ENCODE measurements at regions of chrX and their contacts with region 1.

Region 1: GRCh38 chrX:148051973-148052372 is 70.8 kb downstream of the FMR1NB start:
- DNase-seq: no peak
- ATAC-seq: no peak
- H3K4me3 ChIP-seq: no peak overlapping the region
- H3K27ac ChIP-seq: no peak overlapping the region
- H3K4me1 ChIP-seq: no peaks in the 10 kb centered on the region
- H3K27me3 ChIP-seq: no peaks in the 10 kb centered on the region
- CTCF ChIP-seq: no peak
- POLR2A ChIP-seq: no peak

Region 2: GRCh38 chrX:148080593-148080992 is 28.6 kb after region 1 on chrX:
- in situ Hi-C with region 1: no loop called
- intact Hi-C with region 1: no loop called
- DNase-seq: no peak
- ATAC-seq: no peak
- H3K4me3 ChIP-seq: no peak overlapping the region
- H3K27ac ChIP-seq: no peak overlapping the region
- H3K4me1 ChIP-seq: no peaks in the 10 kb centered on the region
- H3K27me3 ChIP-seq: no peaks in the 10 kb centered on the region
- CTCF ChIP-seq: no peak
- POLR2A ChIP-seq: no peak

Region 3: GRCh38 chrX:148448686-148449085 is 396.7 kb after region 1 on chrX:
- in situ Hi-C with region 1: no loop called
- intact Hi-C with region 1: no loop called
- DNase-seq: no peak
- ATAC-seq: no peak
- H3K4me3 ChIP-seq: no peak overlapping the region
- H3K27ac ChIP-seq: no peak overlapping the region
- H3K4me1 ChIP-seq: no peaks in the 10 kb centered on the region
- H3K27me3 ChIP-seq: no peaks in the 10 kb centered on the region
- CTCF ChIP-seq: no peak
- POLR2A ChIP-seq: no peak

Region 4: GRCh38 chrX:149470955-149471354 is 1419.0 kb after region 1 on chrX:
- in situ Hi-C with region 1: no loop called
- intact Hi-C with region 1: loop called (anchors 2 kb)
- DNase-seq: peak; percentile 25 to 56
- ATAC-seq: peak; percentile 88 to 90
- H3K4me3 ChIP-seq: peak overlapping the region in 1 of 4 donors; percentile 3
- H3K27ac ChIP-seq: no peak overlapping the region
- H3K4me1 ChIP-seq: no peaks in the 10 kb centered on the region
- H3K27me3 ChIP-seq: no peaks in the 10 kb centered on the region
- CTCF ChIP-seq: peak; percentile 58 to 87 (median 81)
- POLR2A ChIP-seq: no peak